RWPE1 (cell line): ENCODE measurements at regions of chr17 and their contacts with region 1.

Region 1: DNA sequence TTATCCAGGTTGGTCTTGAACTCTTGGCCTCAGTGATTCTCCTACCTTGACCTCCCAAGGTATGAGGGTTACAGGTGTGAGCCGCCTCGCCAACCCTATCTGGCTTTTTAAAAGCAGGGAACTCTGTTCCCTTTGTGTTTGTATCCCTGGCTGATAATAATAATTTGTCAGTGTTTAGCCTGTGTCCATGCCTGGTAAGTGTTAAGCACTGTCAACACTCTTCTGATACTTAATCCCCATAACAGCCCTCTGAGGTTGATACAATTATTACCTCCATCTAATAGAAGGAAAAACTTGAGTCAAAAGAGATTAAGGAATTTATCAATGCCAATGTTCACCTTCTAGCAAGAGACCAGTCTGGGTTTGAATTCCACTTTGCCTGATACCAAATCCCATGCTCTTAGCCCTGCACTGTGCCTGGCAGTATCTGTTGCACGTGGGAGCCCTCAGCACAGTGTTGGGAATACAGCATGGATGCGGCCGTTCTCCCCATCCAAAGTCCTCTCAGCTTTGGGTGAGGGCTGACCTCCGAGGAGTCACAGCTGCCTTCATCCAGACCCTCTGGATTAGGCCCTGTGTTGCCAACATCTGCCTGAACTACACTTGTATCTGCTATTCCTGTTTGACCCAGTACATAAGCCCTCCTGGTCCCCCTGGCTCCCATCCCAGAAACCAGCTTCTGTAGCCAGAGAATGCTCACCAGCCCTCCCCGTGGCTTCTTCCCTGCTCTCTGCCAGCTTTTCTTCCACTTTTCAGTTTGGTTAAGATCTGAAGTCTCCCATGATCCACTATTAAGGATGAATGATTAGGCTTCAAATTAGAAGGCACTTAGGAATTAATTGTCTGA is 335.6 kb upstream of the ASIC2 start:
- DNase-seq: no peak
- H3K27ac ChIP-seq: no peak overlapping the region
- CTCF ChIP-seq: no peak

Region 2: GRCh38 chr17:33725675-33726271 is 97.0 kb after region 1 on chr17:
- CTCF ChIA-PET with region 1: no interaction called
- POLR2A ChIA-PET with region 1: no interaction called
- DNase-seq: peak; percentile 30
- H3K27ac ChIP-seq: no peak overlapping the region
- CTCF ChIP-seq: peak; percentile 63

Region 3: GRCh38 chr17:34389126-34389750 is 760.5 kb after region 1 on chr17:
- CTCF ChIA-PET with region 1: interaction called, 10 read pairs
- POLR2A ChIA-PET with region 1: no interaction called
- DNase-seq: no peak
- H3K27ac ChIP-seq: no peak overlapping the region
- CTCF ChIP-seq: no peak